ENCODE measurements at regions of chr1 and their contacts with region 1.

Region 1: GRCh38 chr1:175154629-175155472 is 37.7 kb downstream of the KIAA0040 start:
- DNase-seq: peak; percentile 83
- ATAC-seq: peak; percentile 65
- H3K4me3 Mint-ChIP-seq: no peak overlapping the region
- H3K27ac Mint-ChIP-seq: no peak overlapping the region
- H3K4me1 Mint-ChIP-seq: peaks cover 12% of the 10 kb centered on the region
- H3K27me3 Mint-ChIP-seq: peaks cover 25% of the 10 kb centered on the region
- CTCF ChIP-seq: peak; percentile 88

Region 2: DNA sequence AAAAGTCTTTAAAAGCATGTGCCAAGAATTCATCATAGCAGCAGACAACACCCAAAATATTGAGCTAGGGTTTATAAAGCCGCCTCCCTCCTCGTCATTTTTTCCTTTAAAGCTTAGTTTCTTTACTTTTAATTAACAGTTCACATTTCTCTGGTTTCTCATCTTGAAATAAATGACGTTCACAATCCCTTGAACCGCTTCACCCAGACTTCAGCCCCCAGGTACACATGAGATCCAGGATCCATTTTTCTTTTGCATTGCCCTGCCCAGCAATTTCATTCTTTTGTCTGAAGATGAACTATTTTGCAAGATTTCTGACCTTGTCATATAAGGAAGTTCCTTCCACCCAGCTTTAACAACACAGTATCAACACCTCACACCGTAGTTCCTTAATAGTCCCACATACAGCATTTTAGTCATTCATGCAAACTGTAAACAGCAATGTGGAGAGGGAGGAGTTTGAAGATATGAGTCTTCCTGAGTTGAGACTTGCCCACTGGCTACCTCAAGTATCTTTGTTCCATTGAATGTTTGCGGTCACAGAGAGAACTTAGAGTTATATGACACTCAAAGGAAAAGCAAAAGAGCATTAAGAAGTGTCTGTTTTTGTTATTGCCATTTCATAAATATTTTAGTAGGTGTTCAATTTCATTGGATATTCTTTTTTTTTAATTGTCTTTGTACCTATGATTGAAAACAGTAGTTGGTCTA is 190.4 kb before region 1 on chr1:
- CTCF ChIA-PET with region 1: no interaction called
- POLR2A ChIA-PET with region 1: no interaction called
- intact Hi-C with region 1: no loop called
- DNase-seq: peak; percentile 34
- ATAC-seq: peak; percentile 79
- H3K4me3 Mint-ChIP-seq: peak overlapping the region; percentile 68
- H3K27ac Mint-ChIP-seq: peak overlapping the region; percentile 84
- H3K4me1 Mint-ChIP-seq: peaks cover 52% of the 10 kb centered on the region
- H3K27me3 Mint-ChIP-seq: no peaks in the 10 kb centered on the region
- CTCF ChIP-seq: no peak

Region 3: GRCh38 chr1:175124861-175125260 is 30.0 kb before region 1 on chr1:
- CTCF ChIA-PET with region 1: interaction called, 10 read pairs
- POLR2A ChIA-PET with region 1: no interaction called
- intact Hi-C with region 1: no loop called
- DNase-seq: no peak
- ATAC-seq: no peak
- H3K4me3 Mint-ChIP-seq: no peak overlapping the region
- H3K27ac Mint-ChIP-seq: no peak overlapping the region
- H3K4me1 Mint-ChIP-seq: no peaks in the 10 kb centered on the region
- H3K27me3 Mint-ChIP-seq: no peaks in the 10 kb centered on the region
- CTCF ChIP-seq: no peak

Region 4: GRCh38 chr1:175174309-175175165 is 19.7 kb after region 1 on chr1:
- CTCF ChIA-PET with region 1: interaction called, 34 read pairs
- POLR2A ChIA-PET with region 1: interaction called, 3 read pairs
- intact Hi-C with region 1: no loop called
- DNase-seq: no peak
- ATAC-seq: no peak
- H3K4me3 Mint-ChIP-seq: no peak overlapping the region
- H3K27ac Mint-ChIP-seq: no peak overlapping the region
- H3K4me1 Mint-ChIP-seq: peaks cover 45% of the 10 kb centered on the region
- H3K27me3 Mint-ChIP-seq: no peaks in the 10 kb centered on the region
- CTCF ChIP-seq: no peak

Region 5: DNA sequence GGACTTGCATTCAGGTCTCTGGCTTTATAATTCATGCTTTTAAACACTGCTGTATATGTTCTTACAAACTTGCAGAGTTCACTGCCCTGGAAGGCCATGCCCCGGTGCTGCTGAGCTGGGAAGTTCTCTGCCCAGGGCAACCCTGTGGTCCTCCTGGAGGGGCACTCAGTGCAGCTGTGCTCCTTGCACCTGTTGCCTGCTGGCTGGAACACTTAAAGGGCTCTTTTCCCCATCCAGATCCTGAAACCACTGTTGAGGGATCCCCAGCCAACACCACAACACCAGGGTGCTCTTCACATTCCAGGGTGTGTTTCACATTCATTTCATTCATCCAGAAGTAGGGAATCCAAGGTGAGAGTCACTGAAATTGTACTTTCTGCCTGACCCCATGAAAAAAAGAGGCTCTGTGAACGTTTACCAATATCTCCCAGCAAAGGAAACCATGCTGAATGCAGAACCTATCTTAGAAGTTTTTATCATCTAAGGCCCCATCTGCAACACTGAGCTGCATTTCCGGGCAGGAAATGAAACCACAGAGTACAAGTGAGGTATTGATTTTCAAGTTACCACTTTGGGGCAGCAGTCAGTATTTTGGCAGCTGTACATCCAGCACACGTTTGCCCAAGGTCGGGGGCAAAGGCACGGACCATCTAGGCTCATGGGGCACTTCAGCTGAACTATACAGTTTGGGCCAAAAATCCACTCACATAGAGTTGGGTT is 54.1 kb after region 1 on chr1:
- CTCF ChIA-PET with region 1: interaction called, 17 read pairs
- POLR2A ChIA-PET with region 1: no interaction called
- intact Hi-C with region 1: no loop called
- DNase-seq: peak; percentile 70
- ATAC-seq: peak; percentile 82
- H3K4me3 Mint-ChIP-seq: peak overlapping the region; percentile 65
- H3K27ac Mint-ChIP-seq: peak overlapping the region; percentile 96
- H3K4me1 Mint-ChIP-seq: peaks cover 53% of the 10 kb centered on the region
- H3K27me3 Mint-ChIP-seq: no peaks in the 10 kb centered on the region
- CTCF ChIP-seq: no peak

Region 6: GRCh38 chr1:175307160-175307559 is 152.3 kb after region 1 on chr1:
- CTCF ChIA-PET with region 1: interaction called, 14 read pairs
- POLR2A ChIA-PET with region 1: no interaction called
- intact Hi-C with region 1: no loop called
- DNase-seq: no peak
- ATAC-seq: no peak
- H3K4me3 Mint-ChIP-seq: no peak overlapping the region
- H3K27ac Mint-ChIP-seq: no peak overlapping the region
- H3K4me1 Mint-ChIP-seq: no peaks in the 10 kb centered on the region
- H3K27me3 Mint-ChIP-seq: no peaks in the 10 kb centered on the region
- CTCF ChIP-seq: no peak

Region 7: GRCh38 chr1:175331891-175332290 is 177.0 kb after region 1 on chr1:
- CTCF ChIA-PET with region 1: interaction called, 50 read pairs
- POLR2A ChIA-PET with region 1: no interaction called
- intact Hi-C with region 1: no loop called
- DNase-seq: no peak
- ATAC-seq: no peak
- H3K4me3 Mint-ChIP-seq: no peak overlapping the region
- H3K27ac Mint-ChIP-seq: no peak overlapping the region
- H3K4me1 Mint-ChIP-seq: no peaks in the 10 kb centered on the region
- H3K27me3 Mint-ChIP-seq: peaks cover 3% of the 10 kb centered on the region
- CTCF ChIP-seq: no peak